HepG2 (cell line): ENCODE measurements at regions of chr1 and their contacts with region 1.

Region 1: GRCh38 chr1:92784639-92785500 is at the start of gene EVI5:
- DNase-seq: peak; percentile 92
- ATAC-seq: peak; percentile 97
- H3K4me3 ChIP-seq: peak within 1 kb of the TSS; percentile 88 to 94 (median 90)
- H3K27ac ChIP-seq: peak within 1 kb of the TSS; percentile 91
- H3K4me1 ChIP-seq: peaks cover 32% of the 10 kb centered on the region
- H3K27me3 ChIP-seq: peaks cover 0 to 1% of the 10 kb centered on the region in 2 experiments; a peak in 2 of 5 replicates
- CTCF ChIP-seq: peak; percentile 22; the same call in 1 of the 2 replicates
- EP300 ChIP-seq: no peak
- POLR2A ChIP-seq: peak; percentile 74 to 78
- RAD21 ChIP-seq: no peak; the same call in 1 of the 2 replicates
- total RNA-seq, gene EVI5: 12.6 and 17.5 TPM in 2 replicates

Region 2: DNA sequence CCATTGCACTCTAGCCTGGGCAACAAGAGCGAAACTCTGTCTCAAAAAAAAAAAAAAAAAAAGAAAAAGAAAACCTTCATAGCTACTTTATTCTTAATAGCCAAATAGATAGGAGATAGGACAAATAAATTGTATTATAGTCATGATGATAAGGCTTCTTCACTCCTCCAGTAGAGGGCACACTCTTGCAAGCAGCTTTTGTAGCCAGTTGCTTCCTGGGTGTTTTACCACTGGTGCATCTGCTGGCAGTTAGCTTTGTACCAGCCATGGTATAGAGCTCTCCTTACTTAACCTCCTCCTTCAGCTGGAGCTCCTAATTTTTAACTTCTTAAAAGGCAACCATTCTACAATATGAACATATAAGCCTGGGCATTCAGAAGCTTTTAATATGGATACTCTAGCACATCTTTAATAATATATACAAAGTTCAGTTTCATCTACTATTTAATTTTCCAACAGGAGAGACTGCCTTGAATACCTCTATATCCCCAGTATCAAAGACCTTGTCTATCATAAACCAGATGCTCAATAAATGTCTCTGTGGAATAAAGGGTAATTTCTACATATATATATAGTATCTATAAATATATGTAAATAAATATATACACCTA is 35.7 kb before region 1 on chr1:
- CTCF ChIA-PET with region 1: no interaction called
- POLR2A ChIA-PET with region 1: interaction called, 4 read pairs
- in situ Hi-C with region 1: no loop called
- intact Hi-C with region 1: loop called (anchors 2 kb)
- DNase-seq: peak; percentile 62
- ATAC-seq: peak; percentile 80
- H3K4me3 ChIP-seq: no peak overlapping the region
- H3K27ac ChIP-seq: no peak overlapping the region
- H3K4me1 ChIP-seq: no peaks in the 10 kb centered on the region
- H3K27me3 ChIP-seq: no peaks in the 10 kb centered on the region
- CTCF ChIP-seq: peak; percentile 70
- EP300 ChIP-seq: no peak
- POLR2A ChIP-seq: no peak
- RAD21 ChIP-seq: peak; percentile 53; the same call in 1 of the 2 replicates